T-cell (primary cell): ENCODE measurements at regions of chr5 and their contacts with region 1.

Region 1: GRCh38 chr5:76595755-76596481 is 27.3 kb downstream of the F2RL2 start:
- DNase-seq: no peak
- ATAC-seq: no peak
- H3K4me3 ChIP-seq: no peak overlapping the region
- H3K4me3 Mint-ChIP-seq: no peak overlapping the region
- H3K27ac ChIP-seq: no peak overlapping the region
- H3K27ac Mint-ChIP-seq: peak overlapping the region; percentile 47 to 50
- H3K4me1 ChIP-seq: peaks cover 0 to 3% of the 10 kb centered on the region in 2 experiments
- H3K4me1 Mint-ChIP-seq: no peaks in the 10 kb centered on the region
- H3K27me3 ChIP-seq: no peaks in the 10 kb centered on the region
- H3K27me3 Mint-ChIP-seq: no peaks in the 10 kb centered on the region

Region 2: DNA sequence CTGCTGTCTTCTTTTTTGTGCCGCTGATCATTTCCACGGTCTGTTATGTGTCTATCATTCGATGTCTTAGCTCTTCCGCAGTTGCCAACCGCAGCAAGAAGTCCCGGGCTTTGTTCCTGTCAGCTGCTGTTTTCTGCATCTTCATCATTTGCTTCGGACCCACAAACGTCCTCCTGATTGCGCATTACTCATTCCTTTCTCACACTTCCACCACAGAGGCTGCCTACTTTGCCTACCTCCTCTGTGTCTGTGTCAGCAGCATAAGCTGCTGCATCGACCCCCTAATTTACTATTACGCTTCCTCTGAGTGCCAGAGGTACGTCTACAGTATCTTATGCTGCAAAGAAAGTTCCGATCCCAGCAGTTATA is 137.1 kb after region 1 on chr5:
- CTCF ChIA-PET with region 1: no interaction called
- POLR2A ChIA-PET with region 1: interaction called in 1 of 2 experiments, 12 read pairs
- DNase-seq: peak in 33 of 35 experiments; percentile 13 to 83 (median 52)
- ATAC-seq: peak; percentile 75 to 93 (median 79)
- H3K4me3 ChIP-seq: peak overlapping the region in 1 of 2 donors; percentile 37
- H3K4me3 Mint-ChIP-seq: peak overlapping the region; percentile 40 to 55 (median 41)
- H3K27ac ChIP-seq: peak overlapping the region; percentile 87
- H3K27ac Mint-ChIP-seq: peak overlapping the region; percentile 79 to 81
- H3K4me1 ChIP-seq: peaks cover 0 to 46% of the 10 kb centered on the region in 2 experiments
- H3K4me1 Mint-ChIP-seq: peaks cover 13 to 46% (median 33%) of the 10 kb centered on the region in 3 donors
- H3K27me3 ChIP-seq: no peaks in the 10 kb centered on the region
- H3K27me3 Mint-ChIP-seq: peaks cover 0 to 3% of the 10 kb centered on the region in 2 donors